ENCODE measurements at regions of chr2 and their contacts with region 1.

Region 1: GRCh38 chr2:117835990-117836760 is 21.7 kb downstream of the DDX18 start:
- DNase-seq: peak; percentile 5
- H3K4me3 ChIP-seq: peak overlapping the region; percentile 30 to 67 (median 45)
- H3K27ac ChIP-seq: peak overlapping the region in 3 of 4 donors; percentile 49 to 80 (median 51)
- H3K4me1 ChIP-seq: peaks cover 8 to 17% (median 9%) of the 10 kb centered on the region in 3 donors
- H3K27me3 ChIP-seq: no peaks in the 10 kb centered on the region
- CTCF ChIP-seq: peak in 5 of 6 experiments; percentile 59 to 73 (median 65)
- POLR2A ChIP-seq: no peak

Region 2: GRCh38 chr2:118003396-118003824 is 167.2 kb after region 1 on chr2:
- intact Hi-C with region 1: loop called (anchors 10 kb)
- DNase-seq: no peak
- H3K4me3 ChIP-seq: no peak overlapping the region
- H3K27ac ChIP-seq: no peak overlapping the region
- H3K4me1 ChIP-seq: peaks cover 0 to 12% (median 0%) of the 10 kb centered on the region in 3 donors
- H3K27me3 ChIP-seq: no peaks in the 10 kb centered on the region
- CTCF ChIP-seq: peak; percentile 67 to 85 (median 78)
- POLR2A ChIP-seq: no peak

Region 3: GRCh38 chr2:118154176-118154575 is 318.0 kb after region 1 on chr2:
- intact Hi-C with region 1: no loop called
- DNase-seq: no peak
- H3K4me3 ChIP-seq: no peak overlapping the region
- H3K27ac ChIP-seq: no peak overlapping the region
- H3K4me1 ChIP-seq: no peaks in the 10 kb centered on the region
- H3K27me3 ChIP-seq: no peaks in the 10 kb centered on the region
- CTCF ChIP-seq: no peak
- POLR2A ChIP-seq: no peak

Measured in esophagus squamous epithelium (tissue), 5 donors.